ENCODE measurements at regions of chr17 and their contacts with region 1.

Region 1: GRCh38 chr17:74961657-74962490 is 10.7 kb downstream of the HID1 start:
- DNase-seq: peak; percentile 91
- H3K4me3 Mint-ChIP-seq: no peak overlapping the region
- H3K27ac Mint-ChIP-seq: no peak overlapping the region
- H3K4me1 Mint-ChIP-seq: peaks cover 7% of the 10 kb centered on the region
- H3K27me3 Mint-ChIP-seq: no peaks in the 10 kb centered on the region

Region 2: GRCh38 chr17:74748529-74749365 is 213.1 kb before region 1 on chr17 and contains the start of gene NHERF1:
- CTCF ChIA-PET with region 1: interaction called, 10 read pairs
- intact Hi-C with region 1: loop called (anchors 1 kb)
- DNase-seq: peak; percentile 93
- H3K4me3 Mint-ChIP-seq: peak within 1 kb of the TSS; percentile 94
- H3K27ac Mint-ChIP-seq: peak within 1 kb of the TSS; percentile 93
- H3K4me1 Mint-ChIP-seq: peaks cover 54% of the 10 kb centered on the region
- H3K27me3 Mint-ChIP-seq: no peaks in the 10 kb centered on the region
- total RNA-seq, gene NHERF1: 70.8 to 77.6 TPM

Region 3: GRCh38 chr17:74831444-74832146 is 130.3 kb before region 1 on chr17:
- CTCF ChIA-PET with region 1: no interaction called
- intact Hi-C with region 1: no loop called
- DNase-seq: no peak
- H3K4me3 Mint-ChIP-seq: no peak overlapping the region
- H3K27ac Mint-ChIP-seq: no peak overlapping the region
- H3K4me1 Mint-ChIP-seq: no peaks in the 10 kb centered on the region
- H3K27me3 Mint-ChIP-seq: no peaks in the 10 kb centered on the region

Region 4: DNA sequence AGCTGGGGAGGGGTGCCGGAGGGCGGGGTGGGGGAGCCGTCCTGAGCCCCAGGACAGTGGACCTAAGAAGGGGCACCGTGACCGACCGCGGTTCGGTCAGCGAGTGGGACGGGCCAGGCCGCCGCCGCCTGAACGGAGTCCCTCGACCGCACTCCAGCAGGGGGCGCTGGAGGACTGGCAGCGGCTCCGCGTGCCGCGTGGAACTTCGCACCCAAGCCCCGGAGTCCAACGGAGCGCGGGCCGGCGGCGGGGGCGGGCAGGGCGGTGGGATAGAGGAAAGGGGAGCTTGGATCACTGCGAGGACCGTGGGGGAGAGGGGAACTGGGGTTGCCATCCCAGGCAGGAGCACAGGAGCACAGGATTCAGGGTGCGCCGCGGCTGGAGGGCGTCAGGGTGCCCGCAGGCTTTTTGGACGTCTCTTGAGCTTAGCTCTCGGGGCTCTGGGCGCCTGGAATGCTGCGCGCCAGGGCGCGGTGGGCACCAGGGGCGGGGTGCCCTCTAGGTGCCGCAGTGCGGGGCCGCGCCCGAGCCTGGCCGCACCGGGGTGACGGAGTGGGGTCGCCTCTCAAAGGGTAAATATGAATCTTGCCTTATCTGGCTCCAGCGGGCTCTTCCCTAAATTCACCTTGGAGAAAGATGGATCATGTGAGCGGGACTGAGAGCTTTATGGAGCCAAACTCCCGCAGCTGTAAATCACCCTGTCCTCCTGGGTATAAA is 38.2 kb before region 1 on chr17:
- CTCF ChIA-PET with region 1: interaction called, 35 read pairs
- intact Hi-C with region 1: loop called (anchors 1 kb)
- DNase-seq: peak; percentile 75
- H3K4me3 Mint-ChIP-seq: no peak overlapping the region
- H3K27ac Mint-ChIP-seq: no peak overlapping the region
- H3K4me1 Mint-ChIP-seq: peaks cover 9% of the 10 kb centered on the region
- H3K27me3 Mint-ChIP-seq: peaks cover 42% of the 10 kb centered on the region

Region 5: GRCh38 chr17:74987418-74987908 is 25.6 kb after region 1 on chr17 and contains the start of gene CDR2L:
- CTCF ChIA-PET with region 1: interaction called, 18 read pairs
- intact Hi-C with region 1: no loop called
- DNase-seq: peak; percentile 94
- H3K4me3 Mint-ChIP-seq: peak within 1 kb of the TSS; percentile 80
- H3K27ac Mint-ChIP-seq: no peak within 1 kb of the TSS
- H3K4me1 Mint-ChIP-seq: peaks cover 8% of the 10 kb centered on the region
- H3K27me3 Mint-ChIP-seq: peaks cover 9% of the 10 kb centered on the region
- total RNA-seq, gene CDR2L: 0.49 to 0.93 TPM

Region 6: DNA sequence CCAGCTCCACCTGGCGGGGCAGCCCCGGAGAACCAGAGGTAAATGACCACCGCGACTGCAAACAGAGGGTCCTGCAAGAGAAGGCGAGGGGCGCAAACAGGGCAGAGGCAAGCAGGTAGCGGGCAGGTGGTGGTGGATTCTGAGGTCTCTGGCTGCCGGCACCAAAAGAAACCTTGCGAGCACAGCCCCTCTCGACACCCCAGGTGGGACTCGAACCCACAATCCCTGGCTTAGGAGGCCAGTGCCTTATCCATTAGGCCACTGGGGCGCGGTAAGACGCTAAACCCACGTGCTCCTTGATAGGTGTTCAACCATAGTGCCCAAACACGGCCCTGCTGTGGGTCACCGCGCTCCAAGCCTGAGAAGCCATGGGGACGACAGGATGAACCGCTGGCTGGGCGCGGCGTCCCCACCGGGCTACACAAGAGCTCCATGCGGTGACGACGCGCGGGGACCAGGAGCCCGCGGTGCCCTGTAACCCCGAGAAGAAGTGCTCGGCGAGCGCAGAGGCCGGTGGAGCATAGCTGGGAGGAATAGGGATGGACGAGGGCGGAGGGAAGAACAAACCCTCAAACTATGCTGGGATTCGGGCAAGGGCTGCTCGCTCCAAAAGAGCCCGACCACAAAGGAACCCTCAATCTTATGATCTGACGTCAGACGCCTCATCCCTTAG is 72.5 kb after region 1 on chr17:
- CTCF ChIA-PET with region 1: interaction called, 22 read pairs
- intact Hi-C with region 1: loop called (anchors 2 kb)
- DNase-seq: peak; percentile 96
- H3K4me3 Mint-ChIP-seq: peak overlapping the region; percentile 95
- H3K27ac Mint-ChIP-seq: peak overlapping the region; percentile 93
- H3K4me1 Mint-ChIP-seq: peaks cover 46% of the 10 kb centered on the region
- H3K27me3 Mint-ChIP-seq: peaks cover 3% of the 10 kb centered on the region

Region 7: DNA sequence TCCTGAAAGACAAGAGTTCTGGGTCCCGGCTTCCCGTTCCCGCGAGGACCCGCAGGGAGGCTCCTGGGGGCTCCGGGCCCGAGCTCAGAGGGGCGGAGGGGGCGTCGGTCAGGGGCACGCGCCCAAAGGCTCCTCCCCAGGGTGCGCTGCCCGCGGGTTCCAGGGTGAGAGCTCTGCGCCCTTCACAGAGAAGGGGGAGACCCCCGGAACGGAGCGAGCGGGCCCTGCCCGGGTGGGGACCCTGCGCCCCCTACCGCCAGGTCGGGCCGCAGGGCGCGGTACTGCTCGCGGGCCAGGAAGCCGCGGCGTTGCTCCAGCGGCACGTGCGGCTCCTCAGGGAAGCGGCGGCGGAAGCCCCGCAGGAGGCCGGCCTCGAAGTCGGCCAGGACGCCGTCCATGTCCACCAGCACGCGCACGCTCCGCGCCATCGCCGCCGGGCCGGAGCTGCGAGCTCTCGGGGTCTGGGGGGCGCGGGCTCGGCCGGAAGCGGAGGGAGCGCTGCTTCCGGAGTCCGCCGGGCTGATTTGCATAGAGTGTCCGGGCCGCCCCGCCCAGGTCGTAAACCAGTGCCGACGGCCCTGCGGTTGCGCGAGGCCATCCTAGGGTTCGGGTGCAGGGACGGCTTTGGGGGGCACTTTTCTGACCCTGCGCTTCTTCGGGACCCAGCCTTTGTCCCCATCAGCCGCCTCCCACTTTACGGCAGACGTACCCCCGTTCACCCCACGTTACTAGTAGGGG is 169.6 kb after region 1 on chr17 and contains the start of gene NT5C:
- CTCF ChIA-PET with region 1: interaction called, 3 read pairs
- intact Hi-C with region 1: loop called (anchors 1 kb)
- DNase-seq: peak; percentile 71
- H3K4me3 Mint-ChIP-seq: peak within 1 kb of the TSS; percentile 85
- H3K27ac Mint-ChIP-seq: peak within 1 kb of the TSS; percentile 86
- H3K4me1 Mint-ChIP-seq: peaks cover 16% of the 10 kb centered on the region
- H3K27me3 Mint-ChIP-seq: no peaks in the 10 kb centered on the region
- total RNA-seq, gene NT5C: 49.7 to 55.2 TPM

Measured in activated naive CD4-positive, alpha-beta T cell treated with anti-CD3 and anti-CD28 coated beads for 36 hours (primary cell).